Activated CD4-positive, alpha-beta T cell treated with anti-CD3 and anti-CD28 coated beads, Interleukin-2, amount 10 ng/mL, durations not matched to agents 24 days and 14 days (primary cell): ENCODE measurements at regions of chr10 and their contacts with region 1.

Region 1: GRCh38 chr10:71531485-71532446 is 135.0 kb downstream of the CDH23 start:
- DNase-seq: peak; percentile 74
- H3K4me3 Mint-ChIP-seq: peak overlapping the region; percentile 42
- H3K27ac Mint-ChIP-seq: peak overlapping the region; percentile 94
- H3K4me1 Mint-ChIP-seq: peaks cover 16% of the 10 kb centered on the region
- H3K27me3 Mint-ChIP-seq: no peaks in the 10 kb centered on the region

Region 2: GRCh38 chr10:71600849-71601248 is 69.1 kb after region 1 on chr10:
- intact Hi-C with region 1: loop called (anchors 5 kb)
- DNase-seq: no peak
- H3K4me3 Mint-ChIP-seq: peak overlapping the region; percentile 44
- H3K27ac Mint-ChIP-seq: peak overlapping the region; percentile 85
- H3K4me1 Mint-ChIP-seq: peaks cover 17% of the 10 kb centered on the region
- H3K27me3 Mint-ChIP-seq: no peaks in the 10 kb centered on the region

Region 3: DNA sequence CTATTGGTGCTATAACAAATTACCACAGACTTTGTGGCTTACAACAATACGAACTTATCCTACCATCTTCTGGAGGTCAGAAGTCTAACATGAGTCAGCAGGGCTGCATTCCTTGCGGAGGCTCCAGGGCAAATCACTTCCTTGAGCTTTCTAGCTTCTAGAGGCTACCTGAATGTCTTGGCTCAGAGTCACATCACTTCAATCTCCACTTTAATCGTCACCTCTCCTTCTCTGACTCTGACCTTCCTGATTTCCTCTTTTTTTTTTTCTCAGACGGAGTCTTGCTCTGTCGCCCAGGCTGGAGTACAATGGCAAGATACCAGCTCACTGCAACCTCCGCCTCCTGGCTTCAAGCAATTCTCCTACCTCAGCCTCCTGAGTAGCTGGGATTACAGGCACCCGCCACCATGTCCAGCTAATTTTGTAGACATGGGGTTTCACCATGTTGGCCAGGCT is 639.4 kb after region 1 on chr10:
- intact Hi-C with region 1: no loop called
- DNase-seq: peak; percentile 49
- H3K4me3 Mint-ChIP-seq: no peak overlapping the region
- H3K27ac Mint-ChIP-seq: no peak overlapping the region
- H3K4me1 Mint-ChIP-seq: peaks cover 13% of the 10 kb centered on the region
- H3K27me3 Mint-ChIP-seq: no peaks in the 10 kb centered on the region